ENCODE measurements at regions of chr19 and their contacts with region 1.

Region 1: DNA sequence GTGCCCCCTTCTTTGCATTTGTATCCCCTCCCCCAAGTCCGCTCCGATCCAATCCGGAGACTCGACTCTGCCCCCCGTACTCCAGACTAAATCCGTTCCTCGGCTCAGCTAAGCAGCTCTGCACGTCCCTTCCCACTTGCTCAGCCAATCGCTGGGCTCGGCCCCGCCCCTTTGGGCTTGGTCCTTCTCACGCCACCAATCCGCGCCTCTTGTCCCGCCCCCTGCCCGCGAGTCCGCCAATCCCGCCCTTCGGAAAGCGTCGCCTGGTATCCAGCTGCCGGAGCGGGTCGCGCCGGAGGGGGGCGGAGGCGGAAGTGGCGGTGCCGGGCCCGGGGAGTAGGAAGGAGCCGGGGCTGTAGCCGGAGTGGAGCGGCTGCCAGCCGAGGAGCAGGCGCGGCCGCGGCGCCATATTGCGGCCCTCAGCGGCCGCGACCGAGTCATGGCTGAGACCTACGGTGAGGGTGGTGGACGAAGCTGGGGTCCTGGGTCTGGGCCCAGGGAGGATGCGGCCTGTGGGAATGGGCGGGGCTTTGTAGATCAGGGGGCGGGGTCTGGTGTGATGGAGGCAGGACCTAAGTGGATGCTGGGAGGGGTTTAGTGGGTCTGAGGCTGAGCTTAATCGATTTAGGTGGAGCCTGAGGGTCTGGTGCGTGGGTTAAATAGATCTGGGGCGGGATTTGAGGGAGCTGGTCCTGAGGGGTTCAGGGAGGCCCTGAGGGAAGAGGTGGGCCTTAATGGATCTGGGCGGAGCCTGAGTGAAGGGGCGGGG is at the start of gene RAB4B:
- DNase-seq: peak; percentile 100
- ATAC-seq: peak; percentile 77
- H3K4me3 ChIP-seq: peak within 1 kb of the TSS; percentile 67 to 100 (median 87)
- H3K4me3 Mint-ChIP-seq: peak within 1 kb of the TSS; percentile 99
- H3K27ac ChIP-seq: peak within 1 kb of the TSS; percentile 97 to 99
- H3K27ac Mint-ChIP-seq: peak within 1 kb of the TSS; percentile 99
- H3K4me1 ChIP-seq: peaks cover 49 to 64% of the 10 kb centered on the region in 2 donors
- H3K4me1 Mint-ChIP-seq: peaks cover 64% of the 10 kb centered on the region
- H3K27me3 ChIP-seq: no peaks in the 10 kb centered on the region
- H3K27me3 Mint-ChIP-seq: no peaks in the 10 kb centered on the region
- CTCF ChIP-seq: no peak
- total RNA-seq, gene RAB4B: 104 and 108 TPM in 2 replicates

Region 2: DNA sequence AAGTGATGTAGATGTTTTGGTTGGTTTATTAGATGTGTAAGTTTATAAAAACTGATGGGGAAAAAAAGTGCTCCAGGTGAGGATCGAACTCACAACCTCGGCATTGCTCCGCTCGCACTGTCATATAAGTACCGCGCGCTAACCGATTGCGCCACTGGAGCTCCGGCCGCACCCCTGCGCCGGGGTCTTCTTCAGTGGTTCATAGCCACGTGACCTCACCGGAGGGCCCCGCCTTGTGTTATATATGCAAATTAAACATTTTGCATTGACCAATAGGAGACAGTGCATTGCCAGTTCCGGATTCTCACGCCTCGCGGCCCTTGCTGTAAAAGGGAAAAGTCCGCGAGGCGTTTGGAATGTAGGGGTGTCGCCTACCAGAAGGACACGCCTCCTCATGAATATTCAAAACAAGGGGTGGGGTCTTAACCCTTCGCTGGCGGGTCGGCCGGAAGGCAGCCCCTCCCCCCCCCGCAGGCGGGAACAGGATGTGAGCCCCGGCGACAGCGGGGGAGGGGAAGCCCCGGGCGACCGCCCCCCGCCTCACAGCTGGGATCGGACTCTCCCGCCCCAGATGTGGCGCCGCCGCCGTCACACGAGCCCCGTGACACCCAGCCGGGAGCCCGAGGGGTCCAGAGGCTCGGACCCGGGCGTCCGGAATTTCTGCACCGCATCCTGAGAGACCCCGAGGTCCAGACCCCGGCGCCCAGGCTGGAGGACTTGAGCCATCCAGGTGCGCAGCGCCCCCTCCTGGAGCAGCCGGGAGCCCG is 1365.8 kb before region 1 on chr19 and contains the start of gene PLEKHG2:
- CTCF ChIA-PET with region 1: no interaction called
- POLR2A ChIA-PET with region 1: no interaction called
- intact Hi-C with region 1: loop called (anchors 5 kb)
- DNase-seq: peak; percentile 99
- ATAC-seq: peak; percentile 53
- H3K4me3 ChIP-seq: peak within 1 kb of the TSS; percentile 74 to 98 (median 92)
- H3K4me3 Mint-ChIP-seq: peak within 1 kb of the TSS; percentile 94
- H3K27ac ChIP-seq: peak within 1 kb of the TSS; percentile 100
- H3K27ac Mint-ChIP-seq: peak within 1 kb of the TSS; percentile 99
- H3K4me1 ChIP-seq: peaks cover 24 to 40% of the 10 kb centered on the region in 2 donors
- H3K4me1 Mint-ChIP-seq: peaks cover 49% of the 10 kb centered on the region
- H3K27me3 ChIP-seq: no peaks in the 10 kb centered on the region
- H3K27me3 Mint-ChIP-seq: no peaks in the 10 kb centered on the region
- CTCF ChIP-seq: no peak
- total RNA-seq, gene PLEKHG2: 154 and 167 TPM in 2 replicates

Region 3: DNA sequence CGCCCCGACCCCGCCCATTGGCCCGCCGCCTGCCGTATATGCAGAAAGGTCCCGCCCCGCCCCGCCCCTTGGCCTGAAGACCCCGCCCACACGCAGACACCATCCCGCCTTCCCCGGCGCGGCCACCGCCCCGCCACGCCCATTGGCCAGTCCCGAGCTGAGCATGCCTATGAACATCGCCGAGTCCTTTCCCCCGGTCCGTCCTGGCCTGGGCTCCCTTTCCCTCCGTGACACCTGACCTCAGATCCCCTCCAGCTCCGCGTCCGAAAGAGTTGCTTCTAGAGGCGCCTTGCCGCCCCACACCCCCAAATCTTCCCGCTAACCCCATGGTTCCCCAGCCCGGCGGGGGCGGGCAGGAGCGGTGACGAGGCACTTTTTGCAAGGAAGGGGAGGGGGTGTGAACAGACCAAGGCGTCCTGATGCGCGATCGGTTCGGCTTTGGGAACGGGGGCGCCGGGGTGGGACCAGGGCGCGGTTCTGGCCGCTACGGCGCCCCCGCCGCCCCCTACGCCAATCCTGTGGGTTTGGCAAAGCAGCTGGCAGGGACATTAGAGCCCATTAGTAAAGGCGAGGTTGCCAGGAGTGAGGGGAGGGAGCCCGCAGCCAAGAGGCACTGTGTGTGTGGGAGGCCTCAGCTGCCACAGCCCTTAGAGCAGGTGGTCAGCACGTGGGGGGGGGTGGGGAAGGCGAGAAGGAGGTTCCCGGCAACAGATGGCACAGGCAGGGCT is 87.3 kb before region 1 on chr19:
- CTCF ChIA-PET with region 1: interaction called, 5 read pairs
- POLR2A ChIA-PET with region 1: interaction called, 9 read pairs
- intact Hi-C with region 1: loop called (anchors 1 kb)
- DNase-seq: peak; percentile 93
- ATAC-seq: peak; percentile 74
- H3K4me3 ChIP-seq: peak overlapping the region; percentile 26 to 87 (median 62)
- H3K4me3 Mint-ChIP-seq: peak overlapping the region; percentile 97
- H3K27ac ChIP-seq: peak overlapping the region in 1 of 2 donors; percentile 11
- H3K27ac Mint-ChIP-seq: peak overlapping the region; percentile 88
- H3K4me1 ChIP-seq: peaks cover 44 to 51% of the 10 kb centered on the region in 2 donors
- H3K4me1 Mint-ChIP-seq: peaks cover 13% of the 10 kb centered on the region
- H3K27me3 ChIP-seq: no peaks in the 10 kb centered on the region
- H3K27me3 Mint-ChIP-seq: no peaks in the 10 kb centered on the region
- CTCF ChIP-seq: no peak

Region 4: GRCh38 chr19:40716655-40717324 is 61.3 kb before region 1 on chr19 and contains the starts of genes COQ8B and ITPKC:
- CTCF ChIA-PET with region 1: interaction called, 5 read pairs
- POLR2A ChIA-PET with region 1: interaction called, 15 read pairs
- intact Hi-C with region 1: loop called (anchors 1 kb)
- DNase-seq: peak; percentile 98
- ATAC-seq: peak; percentile 75
- H3K4me3 ChIP-seq: peak within 1 kb of the TSS; percentile 79 to 90 (median 83)
- H3K4me3 Mint-ChIP-seq: peak within 1 kb of the TSS; percentile 88
- H3K27ac ChIP-seq: peak within 1 kb of the TSS; percentile 87 to 90
- H3K27ac Mint-ChIP-seq: peak within 1 kb of the TSS; percentile 97
- H3K4me1 ChIP-seq: peaks cover 47 to 64% of the 10 kb centered on the region in 2 donors
- H3K4me1 Mint-ChIP-seq: peaks cover 63% of the 10 kb centered on the region
- H3K27me3 ChIP-seq: no peaks in the 10 kb centered on the region
- H3K27me3 Mint-ChIP-seq: no peaks in the 10 kb centered on the region
- CTCF ChIP-seq: peak; percentile 22
- total RNA-seq, gene COQ8B: 55.4 and 58.9 TPM in 2 replicates
- total RNA-seq, gene ITPKC: 13.1 and 16.0 TPM in 2 replicates

Region 5: DNA sequence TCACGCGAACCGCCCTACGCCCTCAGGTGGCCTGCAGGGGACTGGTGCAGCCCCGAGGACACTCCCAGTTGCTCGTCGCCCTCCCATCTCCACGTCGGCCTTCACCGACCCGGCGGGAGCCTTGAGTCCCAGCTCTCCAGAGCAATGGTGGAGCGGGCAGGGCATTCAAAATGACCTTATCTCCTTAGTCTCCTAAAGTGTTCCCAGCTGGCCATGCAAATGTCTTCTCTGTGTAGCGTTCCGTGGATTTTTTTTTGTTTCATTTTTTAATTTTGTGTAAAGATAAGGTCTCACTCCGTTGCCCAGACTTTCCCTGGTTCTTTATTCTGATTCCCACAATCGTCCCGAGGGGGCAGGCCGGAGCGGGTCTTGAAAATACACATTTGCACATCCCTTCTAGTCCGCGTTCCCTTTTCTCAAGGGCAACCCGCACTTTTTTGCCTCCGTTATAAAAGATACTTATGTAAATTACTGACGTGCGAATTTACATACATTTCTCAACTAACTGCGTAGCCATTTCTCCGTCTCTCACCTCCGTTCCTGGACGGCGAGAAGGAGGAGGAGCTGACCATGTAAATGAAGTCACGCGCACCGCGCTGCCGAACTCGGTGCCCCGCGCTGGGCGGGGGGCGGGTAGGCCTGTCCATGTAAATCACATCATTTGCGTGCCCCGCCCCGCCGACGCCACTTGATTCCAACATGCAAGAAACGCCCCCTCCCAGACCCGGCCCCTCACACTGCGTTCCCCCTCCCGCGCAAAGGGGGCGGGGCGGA is 20.3 kb after region 1 on chr19:
- CTCF ChIA-PET with region 1: interaction called, 48 read pairs
- POLR2A ChIA-PET with region 1: interaction called, 68 read pairs
- intact Hi-C with region 1: loop called (anchors 1 kb)
- DNase-seq: peak; percentile 100
- ATAC-seq: peak; percentile 83
- H3K4me3 ChIP-seq: peak overlapping the region; percentile 59 to 84 (median 67)
- H3K4me3 Mint-ChIP-seq: peak overlapping the region; percentile 90
- H3K27ac ChIP-seq: peak overlapping the region; percentile 85 to 90
- H3K27ac Mint-ChIP-seq: peak overlapping the region; percentile 98
- H3K4me1 ChIP-seq: peaks cover 49% of the 10 kb centered on the region in 2 donors
- H3K4me1 Mint-ChIP-seq: peaks cover 53% of the 10 kb centered on the region
- H3K27me3 ChIP-seq: no peaks in the 10 kb centered on the region
- H3K27me3 Mint-ChIP-seq: no peaks in the 10 kb centered on the region
- CTCF ChIP-seq: peak; percentile 56

Region 6: DNA sequence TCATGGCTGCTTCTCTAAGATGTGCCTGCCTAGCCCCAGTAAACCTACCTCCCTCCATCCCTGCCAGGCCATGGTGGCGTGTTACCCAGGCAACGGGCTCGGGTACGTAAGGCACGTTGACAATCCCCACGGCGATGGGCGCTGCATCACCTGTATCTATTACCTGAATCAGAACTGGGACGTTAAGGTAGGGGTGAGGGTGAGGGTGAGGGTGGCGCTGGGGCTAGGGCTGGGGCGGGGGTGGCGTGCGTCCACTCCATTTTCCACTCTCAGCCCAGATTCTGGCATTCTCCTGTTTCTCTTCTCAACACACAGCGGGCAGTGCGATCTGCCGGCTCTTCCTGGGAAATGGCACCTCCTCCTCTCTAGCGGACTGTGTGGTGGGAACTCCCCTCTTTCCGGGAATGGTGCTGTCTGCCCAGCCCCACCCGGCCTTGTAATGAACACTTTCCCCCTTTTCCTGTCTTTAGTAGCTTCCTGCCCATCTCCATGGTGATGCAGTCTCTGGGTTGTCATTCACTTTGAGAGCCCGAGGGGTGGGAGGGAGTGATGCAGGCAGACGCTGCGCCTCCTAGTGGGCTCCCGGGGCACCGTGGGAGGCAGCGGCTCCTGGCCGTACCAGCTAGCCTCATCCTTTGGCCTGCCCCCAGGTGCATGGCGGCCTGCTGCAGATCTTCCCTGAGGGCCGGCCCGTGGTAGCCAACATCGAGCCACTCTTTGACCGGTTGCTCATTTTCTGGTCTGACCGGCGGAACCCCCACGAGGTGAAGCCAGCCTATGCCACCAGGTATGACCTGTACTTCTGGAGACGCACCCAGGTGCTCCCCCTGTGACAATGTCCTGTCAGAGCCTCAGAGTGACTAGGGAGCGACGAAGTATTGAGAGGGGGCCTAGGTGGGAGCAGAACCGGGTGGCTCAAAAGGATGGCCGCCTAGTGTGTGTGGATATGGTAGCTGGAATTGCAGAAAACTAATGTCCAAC is 28.7 kb after region 1 on chr19:
- CTCF ChIA-PET with region 1: interaction called, 25 read pairs
- POLR2A ChIA-PET with region 1: interaction called, 11 read pairs
- intact Hi-C with region 1: no loop called
- DNase-seq: peak; percentile 73
- ATAC-seq: peak; percentile 15
- H3K4me3 ChIP-seq: no peak overlapping the region
- H3K4me3 Mint-ChIP-seq: peak overlapping the region; percentile 60
- H3K27ac ChIP-seq: peak overlapping the region; percentile 47 to 86
- H3K27ac Mint-ChIP-seq: peak overlapping the region; percentile 85
- H3K4me1 ChIP-seq: peaks cover 60 to 76% of the 10 kb centered on the region in 2 donors
- H3K4me1 Mint-ChIP-seq: peaks cover 81% of the 10 kb centered on the region
- H3K27me3 ChIP-seq: no peaks in the 10 kb centered on the region
- H3K27me3 Mint-ChIP-seq: no peaks in the 10 kb centered on the region
- CTCF ChIP-seq: peak; percentile 85

Region 7: GRCh38 chr19:40813182-40813958 is 35.2 kb after region 1 on chr19:
- CTCF ChIA-PET with region 1: interaction called, 34 read pairs
- POLR2A ChIA-PET with region 1: interaction called, 15 read pairs
- intact Hi-C with region 1: loop called (anchors 5 kb)
- DNase-seq: no peak
- ATAC-seq: no peak
- H3K4me3 ChIP-seq: no peak overlapping the region
- H3K4me3 Mint-ChIP-seq: peak overlapping the region; percentile 97
- H3K27ac ChIP-seq: no peak overlapping the region
- H3K27ac Mint-ChIP-seq: no peak overlapping the region
- H3K4me1 ChIP-seq: peaks cover 13 to 35% of the 10 kb centered on the region in 2 donors
- H3K4me1 Mint-ChIP-seq: peaks cover 35% of the 10 kb centered on the region
- H3K27me3 ChIP-seq: no peaks in the 10 kb centered on the region
- H3K27me3 Mint-ChIP-seq: no peaks in the 10 kb centered on the region
- CTCF ChIP-seq: no peak

Measured in B cell (primary cell).